Activated CD8-positive, alpha-beta memory T cell treated with anti-CD3 and anti-CD28 coated beads, Interleukin-2, amount 10 ng/mL, durations not matched to agents 7 days and 5 days (primary cell): ENCODE measurements at regions of chr3 and their contacts with region 1.

Region 1: GRCh38 chr3:32296256-32297204 is 58.0 kb downstream of the CMTM8 start:
- DNase-seq: peak; percentile 75
- ATAC-seq: peak; percentile 81
- H3K4me3 Mint-ChIP-seq: no peak overlapping the region
- H3K27ac Mint-ChIP-seq: peak overlapping the region; percentile 75
- H3K4me1 Mint-ChIP-seq: peaks cover 16% of the 10 kb centered on the region
- H3K27me3 Mint-ChIP-seq: no peaks in the 10 kb centered on the region

Region 2: DNA sequence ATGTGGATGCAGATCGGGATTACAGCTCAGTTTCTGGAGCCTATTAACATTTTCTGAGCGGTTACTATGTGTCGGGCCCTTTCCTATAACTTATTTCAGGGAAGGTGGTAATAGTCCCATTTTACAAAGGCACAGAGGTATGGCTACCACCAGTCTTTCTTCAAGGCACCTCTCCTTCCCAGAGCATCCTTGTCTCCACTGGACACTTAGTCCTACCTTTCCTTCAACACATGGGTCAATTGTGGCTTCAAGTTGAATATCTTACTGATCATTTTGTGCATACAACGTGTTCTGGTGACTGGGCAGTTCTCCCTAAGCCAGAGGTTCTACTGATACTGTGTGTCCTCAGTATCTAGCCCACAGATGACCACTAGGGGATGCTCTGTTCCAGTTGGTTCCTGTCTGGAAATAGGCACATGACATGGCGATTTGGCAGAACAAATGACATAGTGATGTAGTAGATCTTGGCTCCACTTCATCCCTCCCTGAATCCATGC is 118.8 kb before region 1 on chr3:
- CTCF ChIA-PET with region 1: interaction called, 16 read pairs
- DNase-seq: peak; percentile 68
- ATAC-seq: peak; percentile 79
- H3K4me3 Mint-ChIP-seq: peak overlapping the region; percentile 13
- H3K27ac Mint-ChIP-seq: no peak overlapping the region
- H3K4me1 Mint-ChIP-seq: peaks cover 11% of the 10 kb centered on the region
- H3K27me3 Mint-ChIP-seq: peaks cover 2% of the 10 kb centered on the region

Region 3: GRCh38 chr3:32238453-32239306 is 57.9 kb before region 1 on chr3 and contains the start of gene CMTM8:
- CTCF ChIA-PET with region 1: interaction called, 14 read pairs
- DNase-seq: peak; percentile 57
- ATAC-seq: peak; percentile 87
- H3K4me3 Mint-ChIP-seq: peak within 1 kb of the TSS; percentile 77
- H3K27ac Mint-ChIP-seq: no peak within 1 kb of the TSS
- H3K4me1 Mint-ChIP-seq: peaks cover 13% of the 10 kb centered on the region
- H3K27me3 Mint-ChIP-seq: peaks cover 28% of the 10 kb centered on the region
- total RNA-seq, gene CMTM8: 4.0 to 4.4 TPM

Region 4: GRCh38 chr3:32285891-32286290 is 10.6 kb before region 1 on chr3:
- CTCF ChIA-PET with region 1: interaction called, 17 read pairs
- DNase-seq: peak; percentile 65
- ATAC-seq: peak; percentile 62
- H3K4me3 Mint-ChIP-seq: peak overlapping the region; percentile 8
- H3K27ac Mint-ChIP-seq: peak overlapping the region; percentile 83
- H3K4me1 Mint-ChIP-seq: peaks cover 31% of the 10 kb centered on the region
- H3K27me3 Mint-ChIP-seq: peaks cover 3% of the 10 kb centered on the region

Region 5: DNA sequence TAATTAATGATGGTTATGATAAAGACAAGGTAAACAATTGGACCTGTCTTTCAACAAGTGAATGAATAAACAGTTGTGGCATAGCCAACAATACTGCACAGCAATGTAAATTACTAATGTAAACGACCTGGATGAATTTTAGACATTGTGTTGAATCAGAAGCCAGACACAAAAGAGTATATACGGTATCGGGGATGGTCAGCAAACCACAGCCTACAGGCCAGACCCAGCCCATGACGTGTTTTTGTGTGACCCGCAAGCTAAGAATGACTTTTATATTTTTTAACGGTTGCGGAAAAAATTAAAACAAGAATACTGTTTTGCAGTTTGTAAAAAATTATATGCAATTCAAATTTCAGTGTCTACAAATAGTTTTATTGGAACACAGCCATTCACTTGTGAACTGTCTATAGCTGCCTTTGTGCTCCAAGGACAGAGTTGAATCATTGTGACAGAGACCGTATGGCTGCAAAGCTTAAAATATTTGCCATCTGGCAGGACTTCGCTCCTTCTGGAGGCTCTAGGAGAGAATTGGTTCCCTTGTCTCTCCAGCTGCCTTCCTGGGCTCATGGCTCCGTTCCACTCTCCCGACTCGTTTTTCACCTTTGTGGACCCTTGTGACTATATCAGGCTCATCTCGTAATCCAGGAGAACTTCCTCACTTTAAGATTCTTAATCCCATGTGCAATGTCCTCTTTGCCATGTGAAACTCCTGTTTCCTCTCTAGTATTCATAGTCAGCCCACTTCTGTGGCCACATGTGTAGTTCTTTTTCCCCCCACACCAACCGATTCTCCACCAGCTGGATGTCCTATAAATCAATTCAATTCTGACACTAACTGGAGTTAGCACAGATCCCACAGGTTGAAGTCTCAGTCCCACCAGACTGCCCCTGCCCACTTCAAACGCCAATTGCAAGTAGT is 14.6 kb after region 1 on chr3:
- CTCF ChIA-PET with region 1: interaction called, 43 read pairs
- DNase-seq: no peak
- ATAC-seq: no peak
- H3K4me3 Mint-ChIP-seq: no peak overlapping the region
- H3K27ac Mint-ChIP-seq: no peak overlapping the region
- H3K4me1 Mint-ChIP-seq: peaks cover 19% of the 10 kb centered on the region
- H3K27me3 Mint-ChIP-seq: no peaks in the 10 kb centered on the region

Region 6: GRCh38 chr3:32334675-32335074 is 38.1 kb after region 1 on chr3:
- CTCF ChIA-PET with region 1: interaction called, 26 read pairs
- DNase-seq: peak; percentile 64
- ATAC-seq: peak; percentile 82
- H3K4me3 Mint-ChIP-seq: no peak overlapping the region
- H3K27ac Mint-ChIP-seq: no peak overlapping the region
- H3K4me1 Mint-ChIP-seq: peaks cover 13% of the 10 kb centered on the region
- H3K27me3 Mint-ChIP-seq: no peaks in the 10 kb centered on the region

Region 7: DNA sequence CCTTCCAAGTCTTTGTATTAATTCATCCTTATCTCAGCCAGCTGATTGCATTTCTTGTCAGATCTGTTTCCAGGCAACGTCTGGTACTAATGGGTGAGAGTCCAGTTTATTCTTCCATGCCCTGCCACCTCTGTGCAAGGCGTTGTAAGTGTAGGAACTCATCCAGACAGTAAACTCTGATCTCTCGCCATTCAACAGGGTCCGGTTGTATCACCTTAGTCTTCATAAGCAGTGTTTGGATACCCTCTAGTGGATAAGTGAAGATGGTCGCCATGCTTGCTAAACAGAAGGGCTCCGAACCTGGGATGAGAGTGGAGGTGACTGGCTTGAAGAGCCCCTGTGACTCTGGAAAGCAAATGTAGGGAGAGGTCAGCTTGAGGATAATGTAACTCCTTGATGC is 43.5 kb after region 1 on chr3:
- CTCF ChIA-PET with region 1: interaction called, 26 read pairs
- DNase-seq: no peak
- ATAC-seq: peak; percentile 63
- H3K4me3 Mint-ChIP-seq: no peak overlapping the region
- H3K27ac Mint-ChIP-seq: no peak overlapping the region
- H3K4me1 Mint-ChIP-seq: peaks cover 5% of the 10 kb centered on the region
- H3K27me3 Mint-ChIP-seq: no peaks in the 10 kb centered on the region